Left ventricle myocardium superior (tissue), 1 donor: ENCODE measurements at regions of chr17 and their contacts with region 1.

Region 1: GRCh38 chr17:44775136-44775837 is 16.5 kb downstream of the ADAM11 start:
- DNase-seq: peak; percentile 97
- ATAC-seq: peak; percentile 93

Region 2: DNA sequence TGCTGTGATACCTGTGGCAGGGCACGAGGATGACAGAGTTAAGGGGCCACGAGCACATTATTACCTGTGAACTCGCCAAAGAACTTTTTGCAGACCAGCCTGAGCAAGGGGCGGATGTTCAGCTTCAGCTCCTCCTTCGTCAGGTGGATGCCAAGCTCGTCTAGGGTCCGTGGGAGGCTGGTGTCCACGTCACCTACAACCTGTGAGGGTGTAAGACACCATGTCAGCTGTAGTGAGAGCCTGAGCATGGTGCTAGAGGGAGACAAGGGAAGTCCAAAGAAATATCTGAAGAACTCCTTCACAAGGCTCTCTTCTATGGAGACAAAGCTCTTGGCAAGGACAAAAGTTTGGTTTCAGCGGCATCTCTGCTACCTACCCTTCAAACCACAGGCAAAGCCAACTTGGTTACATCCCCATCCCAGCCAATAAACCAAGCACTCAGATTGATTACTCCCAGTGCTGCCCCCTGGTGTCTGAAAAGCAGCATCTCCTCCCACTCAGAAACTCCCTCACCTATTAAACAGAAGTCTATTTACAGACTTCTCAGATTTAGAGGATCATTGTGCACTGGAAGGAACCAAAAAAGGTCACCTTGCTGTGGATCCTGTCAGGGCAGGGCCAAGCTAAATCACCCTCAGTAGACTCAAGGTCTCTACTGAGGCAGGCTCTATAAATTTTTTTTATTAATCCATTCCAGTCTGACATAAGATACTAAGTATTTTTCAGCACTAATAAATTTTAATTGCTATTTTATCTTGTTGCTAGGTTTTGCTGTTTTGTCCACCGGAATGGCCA is 89.8 kb after region 1 on chr17:
- intact Hi-C with region 1: loop called (anchors 5 kb)
- DNase-seq: peak; percentile 70
- ATAC-seq: peak; percentile 72

Region 3: GRCh38 chr17:44878627-44879221 is 103.4 kb after region 1 on chr17:
- intact Hi-C with region 1: loop called (anchors 5 kb)
- DNase-seq: no peak
- ATAC-seq: no peak

Region 4: GRCh38 chr17:45021607-45022287 is 246.5 kb after region 1 on chr17:
- intact Hi-C with region 1: loop called (anchors 10 kb)
- DNase-seq: peak; percentile 86
- ATAC-seq: peak; percentile 80